MCF 10A (cell line): ENCODE measurements at regions of chr5 and their contacts with region 1.

Region 1: GRCh38 chr5:65925601-65926275 is 637 bp upstream of the ERBIN start:
- DNase-seq: peak; percentile 82
- H3K4me3 Mint-ChIP-seq: peak overlapping the region; percentile 81
- H3K27ac Mint-ChIP-seq: peak overlapping the region; percentile 92
- H3K4me1 Mint-ChIP-seq: peaks cover 24% of the 10 kb centered on the region
- H3K27me3 Mint-ChIP-seq: no peaks in the 10 kb centered on the region
- CTCF ChIP-seq: peak; percentile 22

Region 2: DNA sequence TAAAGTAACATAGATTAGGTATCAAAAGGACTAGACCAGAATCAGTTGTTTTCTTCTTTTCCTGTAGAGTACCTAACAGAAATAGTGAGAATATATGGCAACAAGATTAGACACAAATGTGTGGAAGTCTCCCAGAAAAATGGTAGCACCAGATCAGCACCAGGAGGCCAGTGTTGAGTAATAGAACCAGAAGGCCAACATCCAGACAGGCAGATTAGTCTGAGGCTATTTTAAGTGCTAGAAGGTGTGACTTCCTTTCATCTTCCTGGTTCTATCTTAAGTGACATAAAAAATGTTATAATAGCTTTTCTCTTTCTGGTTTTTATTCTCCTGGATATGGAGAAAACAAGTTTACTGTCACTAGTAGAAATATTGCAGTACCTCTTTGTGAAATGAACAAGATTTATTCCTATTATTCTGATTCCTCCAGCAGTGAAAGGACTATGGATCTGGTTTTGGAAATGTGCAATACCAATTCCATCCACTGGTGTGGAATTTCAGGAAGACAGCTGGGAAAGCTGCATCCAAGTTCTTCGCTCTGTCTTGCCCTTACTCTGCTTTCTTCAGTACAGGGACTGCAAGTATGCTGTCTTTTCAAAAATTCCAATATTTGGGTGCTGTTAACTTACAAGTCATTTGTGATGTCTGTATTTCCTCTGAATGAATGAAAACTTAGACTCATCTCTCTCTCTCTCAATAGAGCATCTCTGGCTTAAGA is 261.8 kb before region 1 on chr5:
- CTCF ChIA-PET with region 1: no interaction called
- POLR2A ChIA-PET with region 1: no interaction called
- intact Hi-C with region 1: no loop called
- DNase-seq: peak; percentile 31
- H3K4me3 Mint-ChIP-seq: no peak overlapping the region
- H3K27ac Mint-ChIP-seq: no peak overlapping the region
- H3K4me1 Mint-ChIP-seq: no peaks in the 10 kb centered on the region
- H3K27me3 Mint-ChIP-seq: no peaks in the 10 kb centered on the region
- CTCF ChIP-seq: peak; percentile 31

Region 3: GRCh38 chr5:65721720-65722574 is 203.8 kb before region 1 on chr5 and contains the starts of genes NLN and SGTB:
- CTCF ChIA-PET with region 1: no interaction called
- POLR2A ChIA-PET with region 1: interaction called, 65 read pairs
- intact Hi-C with region 1: loop called (anchors 5 kb)
- DNase-seq: peak; percentile 78
- H3K4me3 Mint-ChIP-seq: peak within 1 kb of the TSS; percentile 89
- H3K27ac Mint-ChIP-seq: peak within 1 kb of the TSS; percentile 60
- H3K4me1 Mint-ChIP-seq: peaks cover 7% of the 10 kb centered on the region
- H3K27me3 Mint-ChIP-seq: no peaks in the 10 kb centered on the region
- CTCF ChIP-seq: no peak
- total RNA-seq, gene NLN: 24.6 and 42.1 TPM in 2 replicates
- total RNA-seq, gene SGTB: 15.8 and 27.6 TPM in 2 replicates

Region 4: DNA sequence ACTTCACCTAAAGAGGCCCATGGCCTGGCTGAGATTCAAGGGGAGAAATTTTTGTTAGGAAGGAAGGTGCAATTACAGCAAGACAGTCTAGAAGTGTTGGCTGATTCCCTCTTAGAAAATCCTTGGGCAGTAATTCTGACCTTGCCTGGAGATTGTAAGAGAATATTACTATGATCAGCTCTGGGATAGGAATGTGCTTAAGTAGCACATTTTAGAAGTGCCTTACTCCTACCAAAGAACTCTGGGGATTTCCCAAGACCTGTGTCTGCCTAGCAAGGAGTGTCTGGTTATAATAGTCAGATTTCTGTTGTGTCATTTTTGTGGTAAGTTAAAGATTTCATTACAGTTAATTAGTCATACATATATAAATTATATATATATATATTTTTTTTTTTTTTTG is 151.4 kb before region 1 on chr5:
- CTCF ChIA-PET with region 1: interaction called, 3 read pairs
- POLR2A ChIA-PET with region 1: interaction called, 20 read pairs
- intact Hi-C with region 1: loop called (anchors 2 kb)
- DNase-seq: peak; percentile 74
- H3K4me3 Mint-ChIP-seq: no peak overlapping the region
- H3K27ac Mint-ChIP-seq: peak overlapping the region; percentile 59
- H3K4me1 Mint-ChIP-seq: peaks cover 11% of the 10 kb centered on the region
- H3K27me3 Mint-ChIP-seq: no peaks in the 10 kb centered on the region
- CTCF ChIP-seq: no peak

Region 5: GRCh38 chr5:65946198-65946745 is 20.5 kb after region 1 on chr5:
- CTCF ChIA-PET with region 1: no interaction called
- POLR2A ChIA-PET with region 1: interaction called, 17 read pairs
- intact Hi-C with region 1: no loop called
- DNase-seq: no peak
- H3K4me3 Mint-ChIP-seq: no peak overlapping the region
- H3K27ac Mint-ChIP-seq: no peak overlapping the region
- H3K4me1 Mint-ChIP-seq: no peaks in the 10 kb centered on the region
- H3K27me3 Mint-ChIP-seq: no peaks in the 10 kb centered on the region
- CTCF ChIP-seq: no peak

Region 6: GRCh38 chr5:66144074-66144833 is 218.5 kb after region 1 on chr5 and contains the start of gene SREK1:
- CTCF ChIA-PET with region 1: no interaction called
- POLR2A ChIA-PET with region 1: interaction called, 17 read pairs
- intact Hi-C with region 1: loop called (anchors 2 kb)
- DNase-seq: peak; percentile 91
- H3K4me3 Mint-ChIP-seq: peak within 1 kb of the TSS; percentile 85
- H3K27ac Mint-ChIP-seq: peak within 1 kb of the TSS; percentile 100
- H3K4me1 Mint-ChIP-seq: peaks cover 8% of the 10 kb centered on the region
- H3K27me3 Mint-ChIP-seq: no peaks in the 10 kb centered on the region
- CTCF ChIP-seq: no peak
- total RNA-seq, gene SREK1: 87.3 and 102 TPM in 2 replicates

Region 7: DNA sequence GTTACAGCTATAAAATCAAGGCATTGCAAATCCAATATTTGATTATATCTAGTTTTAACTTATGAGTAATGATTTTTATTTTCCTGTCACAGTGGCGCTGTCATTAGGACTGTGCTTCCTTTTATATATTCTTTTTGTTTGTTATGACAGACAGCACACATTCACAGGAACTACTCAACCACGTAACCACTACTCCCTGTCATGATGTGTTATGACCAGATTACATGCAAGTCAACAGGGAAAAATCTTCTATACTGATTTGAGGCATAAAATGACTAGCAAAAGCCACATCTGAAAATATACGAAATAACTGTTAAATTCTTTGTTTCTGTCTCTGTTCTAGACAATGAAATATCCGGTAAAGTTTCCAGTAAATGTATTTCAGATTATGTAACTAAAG is 243.8 kb after region 1 on chr5:
- CTCF ChIA-PET with region 1: no interaction called
- POLR2A ChIA-PET with region 1: no interaction called
- intact Hi-C with region 1: no loop called
- DNase-seq: no peak
- H3K4me3 Mint-ChIP-seq: no peak overlapping the region
- H3K27ac Mint-ChIP-seq: no peak overlapping the region
- H3K4me1 Mint-ChIP-seq: peaks cover 13% of the 10 kb centered on the region
- H3K27me3 Mint-ChIP-seq: no peaks in the 10 kb centered on the region
- CTCF ChIP-seq: no peak